ENCODE measurements at regions of chr14 and their contacts with region 1.

Region 1: GRCh38 chr14:22986508-22987054 is 4.2 kb upstream of the AJUBA start:
- DNase-seq: peak; percentile 81
- ATAC-seq: peak; percentile 47
- H3K4me3 ChIP-seq: no peak overlapping the region
- H3K27ac ChIP-seq: no peak overlapping the region
- H3K4me1 ChIP-seq: peaks cover 2 to 9% of the 10 kb centered on the region in 2 experiments; a peak in 2 of 4 replicates
- H3K27me3 ChIP-seq: no peaks in the 10 kb centered on the region
- CTCF ChIP-seq: peak in 2 of 3 experiments; percentile 89 to 98; a peak in 4 of 6 replicates
- POLR2A ChIP-seq: no peak
- RAD21 ChIP-seq: no peak

Region 2: GRCh38 chr14:22556990-22557623 is 429.5 kb before region 1 on chr14:
- CTCF ChIA-PET with region 1: interaction called, 3 read pairs
- POLR2A ChIA-PET with region 1: no interaction called
- RAD21 ChIA-PET with region 1: no interaction called
- intact Hi-C with region 1: loop called (anchors 2 kb)
- DNase-seq: peak; percentile 48
- ATAC-seq: peak; percentile 92
- H3K4me3 ChIP-seq: 0 out of 4 replicates have a peak overlapping the region, but pooled peaks of 1 of the 2 experiments have one; percentile 23
- H3K27ac ChIP-seq: no peak overlapping the region
- H3K4me1 ChIP-seq: peaks cover 5 to 24% of the 10 kb centered on the region in 2 experiments
- H3K27me3 ChIP-seq: no peaks in the 10 kb centered on the region
- CTCF ChIP-seq: peak; percentile 95 to 100 (median 99)
- POLR2A ChIP-seq: no peak
- RAD21 ChIP-seq: peak; percentile 96

Region 3: GRCh38 chr14:22955702-22956569 is 30.6 kb before region 1 on chr14:
- CTCF ChIA-PET with region 1: interaction called, 11 read pairs
- POLR2A ChIA-PET with region 1: no interaction called
- RAD21 ChIA-PET with region 1: no interaction called
- intact Hi-C with region 1: no loop called
- DNase-seq: no peak
- ATAC-seq: no peak
- H3K4me3 ChIP-seq: peak overlapping the region; percentile 82 to 89
- H3K27ac ChIP-seq: peak overlapping the region; percentile 93
- H3K4me1 ChIP-seq: peaks cover 15 to 22% of the 10 kb centered on the region in 2 experiments
- H3K27me3 ChIP-seq: no peaks in the 10 kb centered on the region
- CTCF ChIP-seq: no peak
- POLR2A ChIP-seq: no peak
- RAD21 ChIP-seq: no peak

Region 4: GRCh38 chr14:23006544-23007419 is 20.2 kb after region 1 on chr14:
- CTCF ChIA-PET with region 1: interaction called, 39 read pairs
- POLR2A ChIA-PET with region 1: interaction called, 10 read pairs
- RAD21 ChIA-PET with region 1: interaction called, 4 to 6 read pairs
- intact Hi-C with region 1: no loop called
- DNase-seq: peak; percentile 96
- ATAC-seq: peak; percentile 93
- H3K4me3 ChIP-seq: peak overlapping the region; percentile 64 to 71
- H3K27ac ChIP-seq: peak overlapping the region; percentile 97
- H3K4me1 ChIP-seq: peaks cover 23 to 60% of the 10 kb centered on the region in 2 experiments
- H3K27me3 ChIP-seq: no peaks in the 10 kb centered on the region
- CTCF ChIP-seq: no peak; a peak in 1 of 6 replicates
- POLR2A ChIP-seq: peak; percentile 94
- RAD21 ChIP-seq: no peak

Region 5: GRCh38 chr14:23076785-23077408 is 90.3 kb after region 1 on chr14:
- CTCF ChIA-PET with region 1: interaction called, 11 read pairs
- POLR2A ChIA-PET with region 1: interaction called, 3 read pairs
- RAD21 ChIA-PET with region 1: no interaction called
- intact Hi-C with region 1: no loop called
- DNase-seq: no peak
- ATAC-seq: peak; percentile 49
- H3K4me3 ChIP-seq: no peak overlapping the region
- H3K27ac ChIP-seq: no peak overlapping the region; the same call in 1 of the 2 replicates
- H3K4me1 ChIP-seq: peaks cover 21 to 54% of the 10 kb centered on the region in 2 experiments
- H3K27me3 ChIP-seq: no peaks in the 10 kb centered on the region
- CTCF ChIP-seq: peak; percentile 45 to 79 (median 62); a peak in 5 of 6 replicates
- POLR2A ChIP-seq: no peak
- RAD21 ChIP-seq: peak; percentile 53

Region 6: GRCh38 chr14:23186913-23187654 is 200.5 kb after region 1 on chr14:
- CTCF ChIA-PET with region 1: no interaction called
- POLR2A ChIA-PET with region 1: no interaction called
- RAD21 ChIA-PET with region 1: no interaction called
- intact Hi-C with region 1: loop called (anchors 5 kb)
- DNase-seq: peak; percentile 64
- ATAC-seq: peak; percentile 68
- H3K4me3 ChIP-seq: no peak overlapping the region
- H3K27ac ChIP-seq: no peak overlapping the region
- H3K4me1 ChIP-seq: peaks cover 6 to 14% of the 10 kb centered on the region in 2 experiments; a peak in 3 of 4 replicates
- H3K27me3 ChIP-seq: no peaks in the 10 kb centered on the region
- CTCF ChIP-seq: peak; percentile 76 to 98 (median 78)
- POLR2A ChIP-seq: no peak
- RAD21 ChIP-seq: peak; percentile 94

Measured in HCT116 (cell line).